Colonic mucosa (tissue), 4 donors: ENCODE measurements at regions of chr5 and their contacts with region 1.

Region 1: GRCh38 chr5:87770601-87771121 is 357.9 kb upstream of the CCNH start:
- DNase-seq: no peak
- H3K4me3 ChIP-seq: no peak overlapping the region
- H3K27ac ChIP-seq: no peak overlapping the region
- H3K4me1 ChIP-seq: no peaks in the 10 kb centered on the region
- H3K27me3 ChIP-seq: no peaks in the 10 kb centered on the region
- CTCF ChIP-seq: no peak

Region 2: GRCh38 chr5:87421307-87421706 is 349.4 kb before region 1 on chr5:
- intact Hi-C with region 1: loop called (anchors 10 kb)
- DNase-seq: no peak
- H3K4me3 ChIP-seq: no peak overlapping the region
- H3K27ac ChIP-seq: no peak overlapping the region
- H3K4me1 ChIP-seq: no peaks in the 10 kb centered on the region
- H3K27me3 ChIP-seq: no peaks in the 10 kb centered on the region
- CTCF ChIP-seq: no peak

Region 3: GRCh38 chr5:87661784-87662566 is 108.7 kb before region 1 on chr5:
- intact Hi-C with region 1: no loop called
- DNase-seq: no peak
- H3K4me3 ChIP-seq: no peak overlapping the region
- H3K27ac ChIP-seq: no peak overlapping the region
- H3K4me1 ChIP-seq: no peaks in the 10 kb centered on the region
- H3K27me3 ChIP-seq: no peaks in the 10 kb centered on the region
- CTCF ChIP-seq: no peak